CD4-positive, alpha-beta T cell (primary cell): ENCODE measurements at regions of chr18 and their contacts with region 1.

Region 1: GRCh38 chr18:47930931-47931717 is 665 bp upstream of the SMAD2 start:
- DNase-seq: peak; percentile 86 to 98 (median 92)
- ATAC-seq: peak; percentile 75
- H3K4me3 ChIP-seq: peak overlapping the region; percentile 56
- H3K4me3 Mint-ChIP-seq: peak overlapping the region; percentile 93
- H3K27ac ChIP-seq: peak overlapping the region; percentile 78 to 92
- H3K27ac Mint-ChIP-seq: peak overlapping the region; percentile 95
- H3K4me1 ChIP-seq: peaks cover 20% of the 10 kb centered on the region
- H3K4me1 Mint-ChIP-seq: peaks cover 45% of the 10 kb centered on the region
- H3K27me3 ChIP-seq: no peaks in the 10 kb centered on the region
- H3K27me3 Mint-ChIP-seq: no peaks in the 10 kb centered on the region
- CTCF ChIP-seq: no peak

Region 2: DNA sequence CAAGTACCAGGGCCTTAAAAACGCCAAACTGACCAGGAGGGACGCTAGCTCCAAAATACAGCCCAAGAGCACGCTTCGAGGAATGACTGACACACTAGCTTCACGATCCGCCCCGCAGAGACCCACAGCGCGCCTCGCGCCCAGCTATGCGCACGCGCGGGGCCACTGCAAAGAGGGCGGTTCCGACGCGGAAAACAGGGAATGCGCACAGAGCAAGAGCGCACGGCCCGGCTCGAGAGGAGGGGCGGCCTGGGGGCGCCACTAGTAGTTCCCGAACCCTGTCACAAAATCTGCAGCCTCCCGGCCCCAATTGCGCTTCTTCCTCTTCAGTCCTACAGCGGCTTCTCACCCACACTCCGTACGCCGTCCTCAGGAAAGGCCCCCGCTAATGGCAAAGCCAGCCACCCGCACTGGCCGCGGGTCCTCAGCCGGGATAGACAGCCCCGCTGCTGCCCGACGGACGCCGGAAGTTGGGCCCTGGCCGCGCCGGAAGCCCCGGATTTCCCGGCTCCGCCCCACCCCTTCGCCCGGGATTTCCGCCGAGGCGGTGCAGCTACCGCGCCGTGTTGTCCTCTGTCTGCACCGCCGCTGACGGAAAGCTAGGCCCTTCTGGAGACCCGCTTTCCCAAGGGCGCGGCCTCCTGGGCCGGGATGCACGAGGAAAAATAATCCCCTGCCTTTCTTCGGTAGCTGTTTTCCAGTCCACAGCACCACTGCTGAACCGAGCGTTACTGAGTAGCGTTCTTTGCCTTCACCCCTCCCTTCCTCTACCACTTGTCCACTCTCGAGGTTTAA is 780.9 kb before region 1 on chr18 and contains the start of gene HDHD2:
- CTCF ChIA-PET with region 1: no interaction called
- POLR2A ChIA-PET with region 1: interaction called, 5 read pairs
- intact Hi-C with region 1: loop called in 1 of 2 experiments (anchors 10 kb)
- DNase-seq: peak; percentile 43 to 84 (median 72)
- ATAC-seq: peak; percentile 75
- H3K4me3 ChIP-seq: peak within 1 kb of the TSS; percentile 80
- H3K4me3 Mint-ChIP-seq: peak within 1 kb of the TSS; percentile 98
- H3K27ac ChIP-seq: peak within 1 kb of the TSS; percentile 74 to 76
- H3K27ac Mint-ChIP-seq: peak within 1 kb of the TSS; percentile 95
- H3K4me1 ChIP-seq: peaks cover 25% of the 10 kb centered on the region
- H3K4me1 Mint-ChIP-seq: peaks cover 63% of the 10 kb centered on the region
- H3K27me3 ChIP-seq: no peaks in the 10 kb centered on the region
- H3K27me3 Mint-ChIP-seq: no peaks in the 10 kb centered on the region
- CTCF ChIP-seq: no peak
- total RNA-seq, gene HDHD2: 7.3 to 8.9 TPM

Region 3: GRCh38 chr18:47901624-47902362 is 29.3 kb before region 1 on chr18:
- CTCF ChIA-PET with region 1: no interaction called
- POLR2A ChIA-PET with region 1: interaction called, 63 read pairs
- intact Hi-C with region 1: loop called (anchors 2 kb)
- DNase-seq: peak in 4 of 14 experiments; percentile 25 to 68 (median 64)
- ATAC-seq: peak; percentile 95
- H3K4me3 ChIP-seq: peak overlapping the region; percentile 10
- H3K4me3 Mint-ChIP-seq: peak overlapping the region; percentile 76
- H3K27ac ChIP-seq: peak overlapping the region in 1 of 2 donors; percentile 62
- H3K27ac Mint-ChIP-seq: peak overlapping the region; percentile 87
- H3K4me1 ChIP-seq: peaks cover 17% of the 10 kb centered on the region
- H3K4me1 Mint-ChIP-seq: peaks cover 92% of the 10 kb centered on the region
- H3K27me3 ChIP-seq: no peaks in the 10 kb centered on the region
- H3K27me3 Mint-ChIP-seq: no peaks in the 10 kb centered on the region
- CTCF ChIP-seq: no peak

Region 4: GRCh38 chr18:47917923-47918610 is 13.1 kb before region 1 on chr18:
- CTCF ChIA-PET with region 1: interaction called, 6 read pairs
- POLR2A ChIA-PET with region 1: interaction called, 24 read pairs
- intact Hi-C with region 1: no loop called
- DNase-seq: no peak
- ATAC-seq: no peak
- H3K4me3 ChIP-seq: no peak overlapping the region
- H3K4me3 Mint-ChIP-seq: peak overlapping the region; percentile 12
- H3K27ac ChIP-seq: no peak overlapping the region
- H3K27ac Mint-ChIP-seq: peak overlapping the region; percentile 66
- H3K4me1 ChIP-seq: peaks cover 22% of the 10 kb centered on the region
- H3K4me1 Mint-ChIP-seq: peaks cover 94% of the 10 kb centered on the region
- H3K27me3 ChIP-seq: no peaks in the 10 kb centered on the region
- H3K27me3 Mint-ChIP-seq: no peaks in the 10 kb centered on the region
- CTCF ChIP-seq: no peak

Region 5: GRCh38 chr18:48161191-48161910 is 230.2 kb after region 1 on chr18:
- CTCF ChIA-PET with region 1: no interaction called
- POLR2A ChIA-PET with region 1: no interaction called
- intact Hi-C with region 1: loop called in 1 of 2 experiments (anchors 5 kb)
- DNase-seq: peak; percentile 34 to 72 (median 51)
- ATAC-seq: peak; percentile 91
- H3K4me3 ChIP-seq: peak overlapping the region; percentile 49
- H3K4me3 Mint-ChIP-seq: peak overlapping the region; percentile 77
- H3K27ac ChIP-seq: no peak overlapping the region
- H3K27ac Mint-ChIP-seq: no peak overlapping the region
- H3K4me1 ChIP-seq: peaks cover 14% of the 10 kb centered on the region
- H3K4me1 Mint-ChIP-seq: peaks cover 6% of the 10 kb centered on the region
- H3K27me3 ChIP-seq: peaks cover 0 to 6% of the 10 kb centered on the region in 2 experiments
- H3K27me3 Mint-ChIP-seq: peaks cover 25% of the 10 kb centered on the region
- CTCF ChIP-seq: no peak